Activated T-helper 1 cell treated with anti-CD3 and anti-CD28 coated beads, Interleukin-12 subunit alpha, Interleukin-12 subunit beta, Interleukin-2, Interleukin-4 antibody, amounts not matched to agents 30 ng/mL and 10 ng/mL and 1 ng/mL, durations not matched to agents 14 hours and 24 hours and 36 hours (primary cell): ENCODE measurements at regions of chr15 and their contacts with region 1.

Region 1: GRCh38 chr15:75042730-75043508 is 19.5 kb downstream of the PPCDC start:
- DNase-seq: peak; percentile 71
- H3K4me3 Mint-ChIP-seq: peak overlapping the region; percentile 41
- H3K27ac Mint-ChIP-seq: peak overlapping the region; percentile 77
- H3K4me1 Mint-ChIP-seq: peaks cover 87% of the 10 kb centered on the region
- H3K27me3 Mint-ChIP-seq: no peaks in the 10 kb centered on the region

Region 2: GRCh38 chr15:74692327-74692726 is 350.6 kb before region 1 on chr15:
- intact Hi-C with region 1: no loop called
- DNase-seq: no peak
- H3K4me3 Mint-ChIP-seq: peak overlapping the region; percentile 15
- H3K27ac Mint-ChIP-seq: no peak overlapping the region
- H3K4me1 Mint-ChIP-seq: peaks cover 40% of the 10 kb centered on the region
- H3K27me3 Mint-ChIP-seq: peaks cover 2% of the 10 kb centered on the region

Region 3: DNA sequence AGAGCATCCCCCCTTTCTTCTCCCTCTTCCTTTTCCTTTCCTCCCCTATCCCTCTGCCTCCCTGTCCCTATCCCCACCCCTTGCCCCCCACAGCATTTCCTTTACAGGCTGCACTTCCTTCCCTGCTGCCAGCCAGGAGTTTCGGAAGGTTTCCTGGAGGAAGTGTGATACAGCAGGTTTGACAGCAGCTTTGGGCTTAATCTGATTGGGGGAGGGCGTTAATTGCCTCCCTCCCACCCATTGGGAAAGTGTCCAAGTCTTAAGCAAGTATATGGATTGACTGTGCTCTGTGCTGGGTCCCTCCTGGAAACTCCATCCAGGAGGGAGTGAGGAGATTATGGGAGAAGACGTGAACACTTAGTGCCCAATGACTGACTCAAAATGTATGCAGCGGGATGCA is 45.8 kb before region 1 on chr15:
- intact Hi-C with region 1: no loop called
- DNase-seq: no peak
- H3K4me3 Mint-ChIP-seq: no peak overlapping the region
- H3K27ac Mint-ChIP-seq: no peak overlapping the region
- H3K4me1 Mint-ChIP-seq: peaks cover 4% of the 10 kb centered on the region
- H3K27me3 Mint-ChIP-seq: peaks cover 29% of the 10 kb centered on the region

Region 4: GRCh38 chr15:75029378-75030022 is 13.4 kb before region 1 on chr15:
- intact Hi-C with region 1: loop called (anchors 1 kb)
- DNase-seq: peak; percentile 80
- H3K4me3 Mint-ChIP-seq: peak overlapping the region; percentile 37
- H3K27ac Mint-ChIP-seq: peak overlapping the region; percentile 51
- H3K4me1 Mint-ChIP-seq: peaks cover 52% of the 10 kb centered on the region
- H3K27me3 Mint-ChIP-seq: no peaks in the 10 kb centered on the region